Right ventricle myocardium inferior (tissue), 1 donor: ENCODE measurements at regions of chr2 and their contacts with region 1.

Region 1: DNA sequence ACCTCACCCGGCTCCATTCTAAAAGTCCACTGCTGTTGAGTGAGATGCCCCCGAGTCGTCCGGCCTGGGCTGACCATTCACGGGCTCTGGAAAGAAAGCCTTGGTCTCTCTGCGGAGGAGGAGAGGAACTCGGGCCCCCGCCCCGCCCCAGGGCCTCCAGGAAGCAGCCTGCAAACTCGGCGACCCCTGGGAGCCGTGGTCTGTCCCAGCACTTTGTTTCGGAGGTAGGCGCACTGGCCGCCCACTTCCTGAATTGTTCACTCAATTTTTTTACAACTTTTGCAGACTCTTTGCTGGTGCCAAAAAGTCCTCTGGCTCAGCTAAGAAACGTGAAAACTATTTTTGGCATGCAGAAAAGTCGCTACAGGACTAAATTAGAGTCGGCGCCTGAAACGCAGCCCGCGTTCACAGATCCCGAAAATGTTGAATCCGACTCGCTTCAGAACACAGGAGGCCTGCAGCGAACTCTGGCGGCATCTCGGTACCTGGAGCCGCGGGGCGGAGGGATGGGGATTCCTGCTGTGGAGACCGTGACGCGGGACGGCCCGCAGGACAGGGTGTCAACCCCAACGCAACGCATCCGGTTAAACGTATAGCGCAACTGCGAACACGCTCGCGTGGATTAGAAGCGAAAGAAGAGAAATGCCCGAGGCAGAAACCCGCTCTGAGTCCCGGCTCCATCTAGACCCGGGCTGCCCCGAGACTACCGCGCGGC is 1.5 kb downstream of the PXDN start:
- DNase-seq: peak; percentile 84
- ATAC-seq: peak; percentile 66

Region 2: DNA sequence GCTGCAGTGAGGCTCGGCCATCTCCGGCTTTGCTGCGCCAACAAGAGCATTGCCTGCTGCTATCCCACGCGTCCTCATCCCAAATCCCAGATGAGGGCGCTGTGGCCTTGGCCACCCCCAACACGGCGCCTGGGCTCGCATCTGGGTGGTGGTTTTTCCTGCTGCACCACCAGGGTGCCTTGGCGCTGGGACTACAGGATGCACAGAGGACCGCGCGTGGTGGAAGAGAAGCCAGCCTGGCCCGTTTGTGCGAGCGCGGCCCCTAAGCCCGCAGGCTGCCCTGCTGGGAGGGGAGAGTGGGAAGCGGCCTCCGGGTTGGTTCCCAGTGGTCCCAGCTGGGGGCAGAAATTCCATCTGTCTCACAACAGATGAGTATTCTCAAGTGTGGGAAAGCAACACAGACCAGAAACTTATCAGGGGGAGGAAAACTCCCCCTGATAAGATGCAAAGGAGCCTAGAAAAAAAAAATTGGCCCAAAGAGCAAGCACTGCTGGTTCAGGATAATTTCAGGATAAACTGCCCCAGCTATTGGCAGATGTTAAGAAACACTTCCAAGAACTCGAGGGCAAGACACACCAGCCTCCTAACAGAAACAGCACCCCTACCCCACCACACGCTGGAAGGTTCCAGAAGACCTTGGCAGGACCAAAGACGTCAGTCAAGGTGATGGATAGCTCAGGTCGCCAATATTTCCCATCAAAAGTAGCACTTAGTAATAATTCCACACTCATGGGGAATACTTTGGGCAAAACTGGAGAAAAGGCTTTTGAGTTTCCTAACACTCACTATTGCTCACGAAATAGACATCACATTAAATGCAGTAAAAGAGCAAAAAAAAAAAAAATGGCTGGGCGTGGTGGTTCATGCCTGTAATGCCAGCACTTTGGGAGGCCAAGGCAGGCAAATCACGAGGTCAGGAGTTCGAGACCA is 150.6 kb before region 1 on chr2:
- intact Hi-C with region 1: loop called (anchors 2 kb)
- DNase-seq: peak; percentile 88
- ATAC-seq: peak; percentile 82

Region 3: DNA sequence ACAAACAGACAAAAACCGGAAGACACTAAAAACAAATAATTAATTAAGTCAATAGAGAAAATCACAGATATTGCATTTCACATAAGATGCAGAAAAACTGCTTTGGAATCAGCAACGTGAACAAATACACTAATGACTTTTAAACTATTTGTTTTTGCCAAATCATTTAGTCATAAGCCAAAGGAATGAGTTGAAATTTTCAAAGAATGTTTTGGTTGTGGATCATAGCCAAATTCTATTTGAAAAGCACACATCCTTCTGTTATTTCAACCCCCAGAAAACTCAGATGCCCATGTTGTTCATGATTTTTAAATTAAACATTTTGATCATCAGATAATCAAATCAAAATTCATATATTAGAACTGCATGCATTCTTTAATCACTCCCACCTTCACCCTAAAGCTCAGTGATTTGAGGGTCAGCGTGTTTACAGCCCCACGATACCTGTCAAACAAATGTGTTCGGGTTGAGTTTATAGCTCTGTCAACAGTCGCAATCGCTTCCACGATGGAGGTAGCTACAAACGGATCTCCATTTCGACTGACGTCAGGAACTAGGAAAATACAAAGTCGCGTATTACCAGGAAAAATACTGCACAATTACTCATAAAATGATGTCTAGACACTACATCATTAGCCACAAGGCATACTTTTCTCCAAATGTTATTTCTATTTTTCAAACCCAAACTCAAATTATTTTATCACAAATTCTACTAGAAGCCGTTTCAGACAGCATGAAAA is 88.7 kb before region 1 on chr2:
- intact Hi-C with region 1: loop called (anchors 5 kb)
- DNase-seq: no peak
- ATAC-seq: no peak

Region 4: DNA sequence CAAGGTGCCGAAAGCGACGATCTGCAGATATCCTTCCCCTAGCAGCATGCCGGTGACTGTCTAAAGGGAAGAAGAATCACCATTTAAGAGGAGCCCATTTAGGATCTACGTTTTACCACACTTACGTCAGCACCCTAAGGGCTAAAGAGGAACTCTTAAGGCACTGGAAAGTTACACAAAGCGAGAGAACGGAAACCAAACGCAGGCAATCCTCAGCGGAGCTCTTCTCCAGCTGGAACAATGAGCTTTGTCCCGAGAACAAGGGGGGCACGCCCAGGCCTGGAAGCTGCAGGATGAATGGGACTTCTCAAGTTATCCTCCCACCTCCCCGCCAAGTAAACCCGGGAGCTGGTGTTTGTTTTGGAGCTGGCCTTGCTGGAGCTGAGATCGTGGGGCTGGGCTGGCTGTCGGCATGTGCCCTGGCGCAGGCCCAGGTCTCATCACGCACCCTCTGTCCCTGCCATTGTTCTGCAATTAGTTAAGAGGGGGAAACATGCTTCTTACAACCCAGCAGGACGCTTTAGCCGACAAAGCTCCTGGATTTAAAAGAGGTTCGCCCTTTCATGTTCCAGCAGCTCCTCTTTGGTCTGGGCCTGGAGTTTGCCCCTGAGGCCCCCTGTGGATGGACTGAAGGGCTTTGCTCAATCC is 34.9 kb before region 1 on chr2:
- intact Hi-C with region 1: loop called (anchors 1 kb)
- DNase-seq: peak; percentile 89
- ATAC-seq: peak; percentile 84

Region 5: DNA sequence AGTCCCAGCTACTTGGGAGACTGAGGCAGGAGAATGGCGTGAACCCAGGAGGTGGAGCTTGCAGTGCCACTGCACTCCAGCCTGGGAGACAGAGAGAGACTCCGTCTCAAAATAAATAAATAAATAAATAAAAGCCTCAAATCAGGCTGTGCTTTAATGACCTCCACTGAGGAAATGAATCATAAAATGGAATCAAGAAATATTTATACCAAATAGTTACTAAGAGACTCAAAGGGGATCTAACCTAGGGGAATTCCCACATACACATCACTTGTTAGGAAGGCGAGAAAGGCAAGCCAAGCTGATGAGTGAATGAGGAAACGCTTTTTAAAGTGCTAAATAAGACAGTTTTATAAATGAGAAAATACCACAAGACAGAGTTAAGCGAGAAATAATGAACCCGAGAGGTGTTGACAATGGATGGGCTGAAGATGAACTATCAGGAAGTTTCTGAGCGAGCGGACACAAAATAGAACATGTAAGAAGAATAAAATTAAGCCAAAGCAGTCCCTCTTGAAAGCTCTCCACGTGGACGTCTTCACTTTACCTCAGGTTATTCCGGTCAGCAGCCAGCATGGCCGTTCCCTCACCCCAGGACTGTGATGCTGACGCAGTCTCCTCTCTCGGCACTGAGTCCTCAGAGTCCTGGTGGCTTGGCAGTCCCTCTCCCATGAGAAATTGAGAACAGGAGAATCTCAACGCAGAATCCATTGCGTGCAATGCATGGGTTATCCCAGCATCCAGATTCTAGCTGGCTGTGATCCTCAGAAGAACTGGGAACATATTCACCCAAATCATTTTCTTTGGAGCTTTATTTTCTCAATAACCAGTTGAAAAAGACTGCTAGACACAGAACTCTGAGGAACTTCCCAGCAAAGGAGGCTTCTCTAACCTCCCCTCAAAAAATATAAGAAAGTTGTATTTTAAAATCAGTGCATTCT is 20.9 kb before region 1 on chr2:
- intact Hi-C with region 1: loop called (anchors 2 kb)
- DNase-seq: no peak
- ATAC-seq: no peak

Region 6: GRCh38 chr2:2075875-2076529 is 333.2 kb after region 1 on chr2:
- intact Hi-C with region 1: no loop called
- DNase-seq: no peak
- ATAC-seq: no peak